ENCODE measurements at regions of chr13 and their contacts with region 1.

Region 1: DNA sequence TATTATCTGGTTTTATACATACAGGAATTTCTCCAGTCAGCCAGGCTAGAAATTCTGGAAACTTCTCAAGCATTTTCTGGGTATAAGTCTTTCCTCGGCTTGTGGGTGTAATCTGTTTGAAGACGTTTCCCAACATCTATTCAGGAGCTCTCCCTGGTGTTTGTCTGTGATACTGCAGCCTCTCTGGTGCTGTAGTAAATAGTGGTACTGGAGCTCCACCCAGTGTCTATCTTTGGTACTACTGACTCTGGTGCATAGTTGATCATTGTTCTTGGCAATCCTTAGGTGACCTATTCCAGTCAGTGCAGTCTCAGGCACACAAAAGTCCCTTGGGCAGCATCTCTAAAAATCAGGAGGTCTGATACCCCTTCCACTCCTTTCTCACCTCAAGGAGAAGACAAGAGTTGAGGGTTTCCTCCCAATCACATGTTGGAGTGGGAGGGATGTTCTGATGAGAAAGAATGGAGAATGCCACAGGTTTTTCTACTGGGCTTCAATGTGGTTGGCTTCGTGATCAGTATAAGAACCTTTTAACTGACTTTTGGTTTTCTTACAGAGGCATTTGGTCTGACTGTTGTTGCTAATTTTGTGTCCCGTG is 115.5 kb downstream of the CYSLTR2 start:
- DNase-seq: peak; percentile 76
- H3K4me3 Mint-ChIP-seq: no peak overlapping the region
- H3K27ac Mint-ChIP-seq: no peak overlapping the region
- H3K4me1 Mint-ChIP-seq: peaks cover 19% of the 10 kb centered on the region
- H3K27me3 Mint-ChIP-seq: peaks cover 34% of the 10 kb centered on the region

Region 2: GRCh38 chr13:47774671-47774994 is 994.6 kb before region 1 on chr13:
- intact Hi-C with region 1: loop called (anchors 10 kb)
- DNase-seq: no peak
- H3K4me3 Mint-ChIP-seq: no peak overlapping the region
- H3K27ac Mint-ChIP-seq: no peak overlapping the region
- H3K4me1 Mint-ChIP-seq: no peaks in the 10 kb centered on the region
- H3K27me3 Mint-ChIP-seq: peaks cover 6% of the 10 kb centered on the region

Region 3: GRCh38 chr13:48126944-48127830 is 642.0 kb before region 1 on chr13:
- intact Hi-C with region 1: loop called (anchors 1 kb)
- DNase-seq: peak; percentile 8
- H3K4me3 Mint-ChIP-seq: no peak overlapping the region
- H3K27ac Mint-ChIP-seq: no peak overlapping the region
- H3K4me1 Mint-ChIP-seq: peaks cover 11% of the 10 kb centered on the region
- H3K27me3 Mint-ChIP-seq: peaks cover 7% of the 10 kb centered on the region

Region 4: DNA sequence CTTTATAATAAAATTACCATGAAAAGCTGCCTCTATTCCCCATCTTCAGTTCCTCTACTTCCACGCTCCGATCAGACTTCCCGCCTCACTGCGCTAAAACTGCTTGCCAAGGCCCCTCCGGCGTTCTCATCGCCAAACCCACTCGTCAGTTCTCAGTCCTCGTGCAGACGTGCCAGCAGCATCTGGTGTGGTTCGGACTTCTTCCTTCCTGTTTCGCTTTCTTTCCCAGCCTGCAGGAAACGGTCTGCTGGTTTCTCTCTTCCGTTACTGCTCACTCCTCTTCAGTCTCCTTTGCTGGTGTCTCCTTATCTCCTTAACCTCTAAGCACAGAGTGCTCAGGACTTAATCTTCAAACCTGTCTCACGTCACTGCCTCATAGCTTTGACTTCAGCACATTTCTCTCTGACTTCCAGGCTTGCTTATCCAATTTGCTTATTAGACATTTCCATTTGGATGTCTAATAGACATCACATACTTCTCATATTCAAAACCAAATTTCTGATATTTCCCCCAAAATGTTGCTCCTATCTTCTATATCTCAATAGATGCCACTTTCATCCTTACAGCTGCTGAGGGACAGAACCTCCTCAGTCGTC is 276.6 kb before region 1 on chr13:
- intact Hi-C with region 1: loop called (anchors 5 kb)
- DNase-seq: peak; percentile 68
- H3K4me3 Mint-ChIP-seq: no peak overlapping the region
- H3K27ac Mint-ChIP-seq: no peak overlapping the region
- H3K4me1 Mint-ChIP-seq: peaks cover 39% of the 10 kb centered on the region
- H3K27me3 Mint-ChIP-seq: no peaks in the 10 kb centered on the region

Region 5: GRCh38 chr13:48595431-48596429 is 173.5 kb before region 1 on chr13:
- intact Hi-C with region 1: loop called (anchors 1 kb)
- DNase-seq: peak; percentile 12
- H3K4me3 Mint-ChIP-seq: no peak overlapping the region
- H3K27ac Mint-ChIP-seq: no peak overlapping the region
- H3K4me1 Mint-ChIP-seq: no peaks in the 10 kb centered on the region
- H3K27me3 Mint-ChIP-seq: peaks cover 13% of the 10 kb centered on the region

Region 6: GRCh38 chr13:48731957-48732569 is 37.1 kb before region 1 on chr13:
- intact Hi-C with region 1: loop called (anchors 1 kb)
- DNase-seq: peak; percentile 16
- H3K4me3 Mint-ChIP-seq: peak overlapping the region; percentile 63
- H3K27ac Mint-ChIP-seq: no peak overlapping the region
- H3K4me1 Mint-ChIP-seq: no peaks in the 10 kb centered on the region
- H3K27me3 Mint-ChIP-seq: peaks cover 3% of the 10 kb centered on the region

Measured in activated T-helper 1 cell treated with anti-CD3 and anti-CD28 coated beads, Interleukin-12 subunit alpha, Interleukin-12 subunit beta, Interleukin-2, Interleukin-4 antibody, amounts not matched to agents 30 ng/mL and 10 ng/mL and 1 ng/mL, durations not matched to agents 14 hours and 24 hours and 36 hours (primary cell).